ENCODE measurements at regions of chr2 and their contacts with region 1.

Region 1: GRCh38 chr2:117692001-117692763 is 122.3 kb upstream of the DDX18 start:
- DNase-seq: no peak
- H3K4me3 ChIP-seq: no peak overlapping the region
- H3K27ac ChIP-seq: no peak overlapping the region
- H3K4me1 ChIP-seq: no peaks in the 10 kb centered on the region
- H3K27me3 ChIP-seq: no peaks in the 10 kb centered on the region
- CTCF ChIP-seq: no peak
- POLR2A ChIP-seq: no peak

Region 2: DNA sequence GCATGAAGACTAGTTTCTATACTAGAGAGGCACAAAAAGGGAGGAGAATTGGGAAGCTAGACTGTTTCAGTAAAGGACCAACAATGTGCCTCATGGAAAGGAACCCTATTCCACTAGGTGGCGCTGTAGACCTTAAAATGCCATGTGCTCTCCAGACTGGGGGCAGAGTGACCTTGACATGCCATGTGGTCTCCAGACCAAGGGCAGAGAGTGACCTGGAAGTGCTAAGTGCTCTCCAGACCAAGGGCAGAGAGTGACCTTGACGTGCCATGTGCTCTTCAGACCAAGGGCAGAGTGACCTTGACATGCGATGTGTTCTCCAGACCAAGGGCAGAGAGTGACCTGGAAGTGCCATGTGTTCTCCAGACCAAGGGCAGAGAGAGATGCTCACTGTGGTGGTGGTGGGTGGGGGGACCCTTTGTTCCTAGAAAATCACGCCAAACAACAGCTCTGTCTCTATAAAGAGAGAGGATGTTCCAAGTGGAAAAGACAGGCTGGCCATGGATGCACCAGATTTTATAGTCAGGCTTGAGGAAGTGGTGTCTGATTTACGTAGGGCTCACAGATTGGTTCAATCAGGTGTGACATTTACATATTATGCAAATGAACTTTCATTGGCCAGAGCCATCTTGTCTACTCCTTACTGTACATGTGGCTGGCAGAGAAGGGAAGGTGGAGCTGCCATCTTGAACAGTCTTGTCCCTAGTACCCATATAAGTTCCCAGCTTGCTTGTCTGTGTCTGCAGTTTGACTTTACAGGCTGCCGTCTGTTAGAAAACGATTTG is 221.7 kb before region 1 on chr2:
- intact Hi-C with region 1: no loop called
- DNase-seq: no peak
- H3K4me3 ChIP-seq: no peak overlapping the region
- H3K27ac ChIP-seq: no peak overlapping the region
- H3K4me1 ChIP-seq: no peaks in the 10 kb centered on the region
- H3K27me3 ChIP-seq: no peaks in the 10 kb centered on the region
- CTCF ChIP-seq: peak in 2 of 3 donors; percentile 21 to 23
- POLR2A ChIP-seq: no peak

Region 3: DNA sequence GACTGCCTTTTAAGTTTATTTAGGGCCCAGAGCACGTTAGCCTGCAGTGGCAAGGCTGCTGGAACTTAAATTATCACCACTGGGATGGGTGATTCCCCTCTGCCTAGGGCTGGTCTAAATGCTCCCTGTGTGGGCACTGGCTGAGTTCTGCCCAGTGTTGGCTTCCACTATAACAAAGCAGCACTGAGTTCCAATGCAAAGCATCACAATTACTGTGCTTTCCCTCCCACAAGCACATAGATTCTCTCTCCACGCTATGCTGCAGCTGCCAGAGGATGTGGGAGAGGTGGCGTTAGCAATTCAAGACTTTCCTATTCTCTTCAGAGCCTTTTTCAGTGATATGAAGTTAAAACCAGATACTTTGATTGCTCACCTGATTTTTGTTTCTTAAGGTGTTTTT is 206.6 kb before region 1 on chr2:
- intact Hi-C with region 1: no loop called
- DNase-seq: no peak
- H3K4me3 ChIP-seq: no peak overlapping the region
- H3K27ac ChIP-seq: no peak overlapping the region
- H3K4me1 ChIP-seq: no peaks in the 10 kb centered on the region
- H3K27me3 ChIP-seq: no peaks in the 10 kb centered on the region
- CTCF ChIP-seq: no peak
- POLR2A ChIP-seq: no peak

Region 4: GRCh38 chr2:117738991-117739839 is 47.0 kb after region 1 on chr2:
- intact Hi-C with region 1: loop called (anchors 1 kb)
- DNase-seq: no peak
- H3K4me3 ChIP-seq: no peak overlapping the region
- H3K27ac ChIP-seq: no peak overlapping the region
- H3K4me1 ChIP-seq: no peaks in the 10 kb centered on the region
- H3K27me3 ChIP-seq: no peaks in the 10 kb centered on the region
- CTCF ChIP-seq: no peak
- POLR2A ChIP-seq: no peak

Region 5: GRCh38 chr2:117862459-117862858 is 170.3 kb after region 1 on chr2:
- intact Hi-C with region 1: no loop called
- DNase-seq: no peak
- H3K4me3 ChIP-seq: no peak overlapping the region
- H3K27ac ChIP-seq: no peak overlapping the region
- H3K4me1 ChIP-seq: no peaks in the 10 kb centered on the region
- H3K27me3 ChIP-seq: peaks cover 0 to 12% of the 10 kb centered on the region in 2 donors
- CTCF ChIP-seq: no peak
- POLR2A ChIP-seq: no peak